ENCODE measurements at regions of chr12 and their contacts with region 1.

Region 1: GRCh38 chr12:89225808-89226411 is 126.4 kb downstream of the DUSP6 start:
- DNase-seq: no peak
- ATAC-seq: peak; percentile 13 to 30 (median 28)
- H3K4me3 ChIP-seq: no peak overlapping the region
- H3K4me3 Mint-ChIP-seq: peak overlapping the region; percentile 33
- H3K27ac ChIP-seq: peak overlapping the region; percentile 50
- H3K27ac Mint-ChIP-seq: peak overlapping the region; percentile 85 to 89
- H3K4me1 ChIP-seq: peaks cover 30% of the 10 kb centered on the region
- H3K4me1 Mint-ChIP-seq: peaks cover 56 to 70% of the 10 kb centered on the region in 2 donors
- H3K27me3 ChIP-seq: no peaks in the 10 kb centered on the region
- H3K27me3 Mint-ChIP-seq: no peaks in the 10 kb centered on the region
- CTCF ChIP-seq: no peak

Region 2: GRCh38 chr12:89212339-89212771 is 13.6 kb before region 1 on chr12:
- intact Hi-C with region 1: no loop called
- DNase-seq: no peak
- ATAC-seq: no peak
- H3K4me3 ChIP-seq: no peak overlapping the region
- H3K4me3 Mint-ChIP-seq: no peak overlapping the region
- H3K27ac ChIP-seq: no peak overlapping the region
- H3K27ac Mint-ChIP-seq: no peak overlapping the region
- H3K4me1 ChIP-seq: no peaks in the 10 kb centered on the region
- H3K4me1 Mint-ChIP-seq: peaks cover 0 to 5% of the 10 kb centered on the region in 2 donors
- H3K27me3 ChIP-seq: no peaks in the 10 kb centered on the region
- H3K27me3 Mint-ChIP-seq: peaks cover 0 to 5% of the 10 kb centered on the region in 2 donors
- CTCF ChIP-seq: no peak

Region 3: GRCh38 chr12:89244536-89244935 is 18.6 kb after region 1 on chr12:
- intact Hi-C with region 1: loop called (anchors 2 kb)
- DNase-seq: peak in 1 of 2 donors; percentile 44
- ATAC-seq: peak; percentile 65 to 82 (median 69)
- H3K4me3 ChIP-seq: no peak overlapping the region
- H3K4me3 Mint-ChIP-seq: peak overlapping the region; percentile 57
- H3K27ac ChIP-seq: peak overlapping the region; percentile 34
- H3K27ac Mint-ChIP-seq: peak overlapping the region; percentile 36 to 52
- H3K4me1 ChIP-seq: peaks cover 11% of the 10 kb centered on the region
- H3K4me1 Mint-ChIP-seq: peaks cover 29 to 33% of the 10 kb centered on the region in 2 donors
- H3K27me3 ChIP-seq: no peaks in the 10 kb centered on the region
- H3K27me3 Mint-ChIP-seq: no peaks in the 10 kb centered on the region
- CTCF ChIP-seq: no peak

Region 4: DNA sequence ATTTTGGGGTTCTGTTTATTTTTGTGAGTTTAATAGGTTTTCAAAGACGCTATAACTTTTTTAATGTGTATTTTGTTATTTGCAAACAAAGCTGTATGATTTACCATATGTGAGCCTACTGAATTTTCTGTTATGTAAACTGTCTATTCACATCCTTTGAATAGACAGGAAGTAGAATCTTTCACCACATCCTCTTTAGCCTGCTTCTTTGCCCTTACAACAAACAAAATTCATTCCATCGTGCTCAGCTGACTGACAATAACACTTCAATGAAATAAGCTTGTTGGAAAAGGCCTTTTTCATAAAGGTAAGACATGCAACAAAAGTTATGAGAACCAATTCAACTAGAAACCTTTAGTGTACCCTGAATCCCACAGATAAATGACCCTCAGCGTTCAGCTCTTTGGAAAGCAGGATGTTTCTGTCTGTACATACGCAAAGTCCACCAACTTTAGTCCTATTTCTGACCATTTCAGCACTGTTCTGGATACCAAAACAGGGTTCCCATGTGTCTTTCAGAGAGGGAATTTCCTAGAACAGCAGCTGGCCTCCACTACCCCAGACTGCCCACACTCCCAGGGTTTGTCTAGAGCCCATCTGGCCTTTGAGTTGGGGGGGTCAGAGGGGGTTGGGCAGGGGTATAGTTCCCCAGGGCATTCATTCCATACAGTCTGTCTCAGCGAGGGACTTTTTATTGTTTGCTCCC is 55.1 kb after region 1 on chr12:
- intact Hi-C with region 1: loop called (anchors 2 kb)
- DNase-seq: peak in 1 of 2 donors; percentile 54
- ATAC-seq: peak; percentile 92 to 94 (median 93)
- H3K4me3 ChIP-seq: no peak overlapping the region
- H3K4me3 Mint-ChIP-seq: peak overlapping the region; percentile 69
- H3K27ac ChIP-seq: peak overlapping the region; percentile 74
- H3K27ac Mint-ChIP-seq: peak overlapping the region; percentile 85 to 90
- H3K4me1 ChIP-seq: peaks cover 9% of the 10 kb centered on the region
- H3K4me1 Mint-ChIP-seq: peaks cover 32 to 37% of the 10 kb centered on the region in 2 donors
- H3K27me3 ChIP-seq: no peaks in the 10 kb centered on the region
- H3K27me3 Mint-ChIP-seq: no peaks in the 10 kb centered on the region
- CTCF ChIP-seq: no peak

Region 5: DNA sequence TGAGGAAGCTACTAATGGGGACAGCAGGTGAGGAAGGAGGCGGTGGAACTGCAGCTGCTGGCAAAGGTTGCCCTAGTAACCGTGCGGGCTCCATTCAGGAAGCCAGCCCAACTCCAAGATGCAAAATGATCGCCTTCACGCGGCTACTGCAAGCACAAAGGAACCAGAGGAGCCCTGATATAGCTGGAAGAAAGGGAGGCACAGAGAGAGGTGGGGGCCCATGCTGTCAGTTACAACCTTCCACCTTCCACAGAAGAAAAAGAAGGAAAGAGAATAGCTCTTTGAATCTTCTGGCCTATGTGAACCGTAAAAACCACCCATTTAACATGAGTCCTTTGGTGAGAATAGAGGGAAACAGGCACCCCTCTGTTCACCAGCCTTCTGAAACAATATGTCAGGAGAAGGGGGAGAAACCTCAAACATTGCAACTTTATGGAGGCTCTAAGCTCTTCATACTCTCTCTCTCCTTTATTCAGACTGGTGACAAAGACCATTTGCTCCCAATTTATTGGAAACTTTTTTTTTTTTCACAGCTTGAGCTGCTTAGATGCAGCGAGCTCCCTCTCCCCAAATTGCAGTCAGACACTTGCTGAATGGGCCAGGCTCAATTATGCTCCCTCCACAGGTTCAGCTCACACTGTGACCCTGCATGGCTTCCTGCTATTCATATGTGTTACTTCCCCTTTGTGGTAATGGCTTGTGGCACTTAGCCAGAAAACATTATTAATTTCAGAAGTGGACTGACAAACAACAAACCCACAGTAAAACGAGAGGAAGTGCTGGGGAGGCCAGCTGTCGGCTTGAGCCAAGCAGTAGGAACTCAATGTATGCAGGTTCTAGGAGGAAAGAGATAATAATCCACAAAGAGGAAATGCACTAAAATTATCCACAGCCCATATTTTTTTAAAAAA is 120.2 kb after region 1 on chr12:
- intact Hi-C with region 1: loop called (anchors 1 kb)
- DNase-seq: peak; percentile 48 to 74
- ATAC-seq: peak; percentile 77 to 92 (median 90)
- H3K4me3 ChIP-seq: peak overlapping the region; percentile 15
- H3K4me3 Mint-ChIP-seq: peak overlapping the region; percentile 98
- H3K27ac ChIP-seq: peak overlapping the region; percentile 23
- H3K27ac Mint-ChIP-seq: peak overlapping the region; percentile 85
- H3K4me1 ChIP-seq: peaks cover 42% of the 10 kb centered on the region
- H3K4me1 Mint-ChIP-seq: peaks cover 82 to 91% of the 10 kb centered on the region in 2 donors
- H3K27me3 ChIP-seq: no peaks in the 10 kb centered on the region
- H3K27me3 Mint-ChIP-seq: no peaks in the 10 kb centered on the region
- CTCF ChIP-seq: no peak